ENCODE measurements at regions of chr2 and their contacts with region 1.

Region 1: DNA sequence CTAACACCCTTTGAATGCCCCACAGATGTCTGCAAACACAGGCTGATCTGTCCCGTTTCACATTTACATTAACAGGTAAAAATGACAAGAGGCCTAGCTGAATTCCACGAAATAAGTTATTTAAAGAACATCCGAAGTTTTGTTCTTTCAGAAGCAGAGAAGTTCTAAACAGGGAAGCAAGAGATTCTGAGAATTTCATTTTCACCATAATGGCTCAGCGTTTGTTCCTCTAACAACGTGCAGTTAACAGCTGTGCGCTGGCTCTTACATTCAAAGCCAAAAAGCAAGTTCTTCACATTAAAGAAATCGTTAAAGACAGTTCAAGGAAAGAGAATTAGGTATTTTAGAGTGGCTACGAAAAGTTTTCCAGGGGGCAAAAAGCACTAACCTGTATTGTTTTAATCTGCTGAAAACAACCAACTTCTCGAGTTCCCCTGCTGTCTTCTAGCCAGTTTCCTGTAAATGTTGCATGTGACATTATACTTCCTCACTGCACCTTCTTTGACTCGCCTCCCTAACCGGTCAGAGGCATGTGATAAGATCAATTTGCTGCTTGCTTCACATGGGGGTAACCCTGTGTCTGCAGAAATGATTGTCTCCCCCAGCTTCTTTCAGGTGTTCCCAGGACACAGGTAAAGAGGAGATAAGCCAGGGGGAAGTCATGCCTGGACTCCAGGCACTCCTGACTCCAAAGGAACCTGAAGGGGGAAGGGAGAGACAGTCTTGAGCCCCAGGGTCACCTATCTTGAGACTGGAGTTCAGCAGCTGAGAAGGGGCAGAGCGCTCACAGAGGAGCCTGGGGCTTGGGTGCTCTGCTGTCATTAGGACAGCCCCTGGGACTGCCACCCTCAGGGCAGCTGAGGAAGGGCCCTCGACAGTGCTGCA is 36.8 kb upstream of the WIPF1 start:
- DNase-seq: peak; percentile 49
- H3K4me3 Mint-ChIP-seq: peak overlapping the region; percentile 94
- H3K27ac Mint-ChIP-seq: peak overlapping the region; percentile 98
- H3K4me1 Mint-ChIP-seq: peaks cover 84% of the 10 kb centered on the region
- H3K27me3 Mint-ChIP-seq: no peaks in the 10 kb centered on the region

Region 2: DNA sequence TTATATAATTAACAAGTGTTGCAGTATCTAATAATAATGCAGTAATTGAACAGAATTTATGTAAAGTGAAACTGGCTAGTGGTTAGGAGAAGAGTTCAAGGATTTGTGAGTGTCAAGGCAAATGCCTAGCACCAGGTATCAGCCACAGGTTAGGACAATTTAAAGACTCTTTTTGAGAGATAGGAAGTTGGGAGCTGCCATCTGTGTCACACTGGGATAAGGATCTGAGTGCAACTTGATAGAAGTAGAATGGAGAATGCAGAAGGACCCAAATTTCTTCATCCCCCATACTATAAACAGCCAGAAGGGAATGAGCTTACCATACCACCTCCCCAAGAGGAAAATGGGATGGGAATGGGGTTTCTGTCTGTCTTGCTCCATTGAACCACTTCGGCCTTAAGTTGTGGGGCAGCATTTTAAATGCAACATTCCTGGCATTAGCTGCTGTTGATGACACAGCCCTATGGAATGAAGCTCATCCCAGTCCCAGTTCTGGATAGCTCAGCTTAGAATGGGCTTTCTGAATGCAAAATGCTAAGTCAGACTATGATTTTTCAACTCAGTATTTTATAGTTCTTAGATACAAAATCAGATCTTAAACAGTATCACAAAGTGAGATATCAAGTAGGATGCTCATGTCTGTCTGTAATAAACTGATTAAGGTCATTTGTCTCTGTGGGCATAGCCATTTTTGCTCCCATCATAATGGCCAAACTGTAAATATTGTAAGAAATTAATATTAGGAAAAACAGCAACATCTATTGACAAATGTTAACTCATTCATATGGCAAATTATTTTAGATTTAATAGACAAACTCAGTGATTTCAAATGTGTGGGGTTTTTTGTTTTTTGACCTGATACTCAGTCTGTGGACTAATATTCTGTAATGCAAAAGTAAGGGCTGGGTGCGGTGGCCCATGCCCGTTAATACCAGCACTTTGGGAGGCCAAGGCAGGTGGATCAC is 191.5 kb before region 1 on chr2:
- intact Hi-C with region 1: no loop called
- DNase-seq: no peak
- H3K4me3 Mint-ChIP-seq: no peak overlapping the region
- H3K27ac Mint-ChIP-seq: no peak overlapping the region
- H3K4me1 Mint-ChIP-seq: no peaks in the 10 kb centered on the region
- H3K27me3 Mint-ChIP-seq: no peaks in the 10 kb centered on the region

Region 3: GRCh38 chr2:174577967-174578589 is 56.3 kb before region 1 on chr2:
- intact Hi-C with region 1: loop called (anchors 1 kb)
- DNase-seq: no peak
- H3K4me3 Mint-ChIP-seq: no peak overlapping the region
- H3K27ac Mint-ChIP-seq: no peak overlapping the region
- H3K4me1 Mint-ChIP-seq: peaks cover 60% of the 10 kb centered on the region
- H3K27me3 Mint-ChIP-seq: no peaks in the 10 kb centered on the region

Region 4: DNA sequence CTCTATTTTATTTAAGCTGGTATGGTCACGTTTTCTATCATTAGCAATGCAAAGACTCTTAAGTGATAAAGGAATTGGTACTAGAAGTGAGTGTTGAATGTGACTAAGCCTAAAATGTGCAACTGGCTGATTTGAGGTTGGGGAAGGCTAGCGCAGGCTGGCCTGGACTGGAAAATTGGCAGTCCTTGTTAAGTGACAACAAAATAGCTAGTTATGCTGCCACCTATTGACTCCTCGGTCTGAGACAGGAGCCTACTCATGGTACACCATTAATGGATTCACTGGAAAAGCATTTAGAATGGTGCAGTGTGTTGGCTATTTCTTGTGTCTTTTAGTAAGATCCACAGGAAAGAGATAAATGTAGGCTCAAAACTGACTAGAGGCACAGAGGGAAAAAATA is 31.1 kb before region 1 on chr2:
- intact Hi-C with region 1: loop called (anchors 1 kb)
- DNase-seq: no peak
- H3K4me3 Mint-ChIP-seq: no peak overlapping the region
- H3K27ac Mint-ChIP-seq: peak overlapping the region; percentile 85
- H3K4me1 Mint-ChIP-seq: peaks cover 90% of the 10 kb centered on the region
- H3K27me3 Mint-ChIP-seq: no peaks in the 10 kb centered on the region

Region 5: DNA sequence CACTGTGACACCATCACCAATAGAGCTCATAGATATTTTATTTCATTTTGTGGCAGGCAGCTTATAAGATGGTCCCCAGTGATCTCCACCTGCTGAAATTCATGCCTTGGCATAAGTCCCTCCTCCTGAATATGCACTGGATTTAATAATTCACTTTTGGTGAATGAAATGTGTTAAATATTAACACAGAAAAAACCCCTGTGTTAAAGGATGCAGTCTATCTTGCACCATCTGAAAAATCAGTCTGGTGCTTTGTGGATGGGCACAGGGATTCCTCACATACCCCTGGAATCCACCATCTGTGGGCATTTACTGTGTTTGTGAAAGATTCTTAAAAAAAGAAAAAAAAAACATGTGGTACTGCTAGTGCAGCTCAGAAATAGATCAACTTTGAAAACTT is 10.7 kb before region 1 on chr2:
- intact Hi-C with region 1: no loop called
- DNase-seq: no peak
- H3K4me3 Mint-ChIP-seq: peak overlapping the region; percentile 28
- H3K27ac Mint-ChIP-seq: peak overlapping the region; percentile 72
- H3K4me1 Mint-ChIP-seq: peaks cover 73% of the 10 kb centered on the region
- H3K27me3 Mint-ChIP-seq: no peaks in the 10 kb centered on the region

Region 6: GRCh38 chr2:174654419-174654941 is 20.1 kb after region 1 on chr2:
- intact Hi-C with region 1: loop called (anchors 2 kb)
- DNase-seq: no peak
- H3K4me3 Mint-ChIP-seq: no peak overlapping the region
- H3K27ac Mint-ChIP-seq: peak overlapping the region; percentile 71
- H3K4me1 Mint-ChIP-seq: peaks cover 55% of the 10 kb centered on the region
- H3K27me3 Mint-ChIP-seq: no peaks in the 10 kb centered on the region

Region 7: GRCh38 chr2:174667379-174667781 is 33.0 kb after region 1 on chr2:
- intact Hi-C with region 1: no loop called
- DNase-seq: no peak
- H3K4me3 Mint-ChIP-seq: no peak overlapping the region
- H3K27ac Mint-ChIP-seq: no peak overlapping the region
- H3K4me1 Mint-ChIP-seq: peaks cover 44% of the 10 kb centered on the region
- H3K27me3 Mint-ChIP-seq: no peaks in the 10 kb centered on the region

Region 8: GRCh38 chr2:175154661-175155082 is 520.3 kb after region 1 on chr2:
- intact Hi-C with region 1: loop called (anchors 1 kb)
- DNase-seq: no peak
- H3K4me3 Mint-ChIP-seq: peak overlapping the region; percentile 41
- H3K27ac Mint-ChIP-seq: peak overlapping the region; percentile 92
- H3K4me1 Mint-ChIP-seq: peaks cover 31% of the 10 kb centered on the region
- H3K27me3 Mint-ChIP-seq: no peaks in the 10 kb centered on the region

Measured in activated T-helper 1 cell treated with anti-CD3 and anti-CD28 coated beads, Interleukin-12 subunit alpha, Interleukin-12 subunit beta, Interleukin-2, Interleukin-4 antibody, amounts not matched to agents 30 ng/mL and 10 ng/mL and 1 ng/mL, durations not matched to agents 14 hours and 24 hours and 36 hours (primary cell).